WTC11 (cell line): ENCODE measurements at regions of chr7 and their contacts with region 1.

Region 1: DNA sequence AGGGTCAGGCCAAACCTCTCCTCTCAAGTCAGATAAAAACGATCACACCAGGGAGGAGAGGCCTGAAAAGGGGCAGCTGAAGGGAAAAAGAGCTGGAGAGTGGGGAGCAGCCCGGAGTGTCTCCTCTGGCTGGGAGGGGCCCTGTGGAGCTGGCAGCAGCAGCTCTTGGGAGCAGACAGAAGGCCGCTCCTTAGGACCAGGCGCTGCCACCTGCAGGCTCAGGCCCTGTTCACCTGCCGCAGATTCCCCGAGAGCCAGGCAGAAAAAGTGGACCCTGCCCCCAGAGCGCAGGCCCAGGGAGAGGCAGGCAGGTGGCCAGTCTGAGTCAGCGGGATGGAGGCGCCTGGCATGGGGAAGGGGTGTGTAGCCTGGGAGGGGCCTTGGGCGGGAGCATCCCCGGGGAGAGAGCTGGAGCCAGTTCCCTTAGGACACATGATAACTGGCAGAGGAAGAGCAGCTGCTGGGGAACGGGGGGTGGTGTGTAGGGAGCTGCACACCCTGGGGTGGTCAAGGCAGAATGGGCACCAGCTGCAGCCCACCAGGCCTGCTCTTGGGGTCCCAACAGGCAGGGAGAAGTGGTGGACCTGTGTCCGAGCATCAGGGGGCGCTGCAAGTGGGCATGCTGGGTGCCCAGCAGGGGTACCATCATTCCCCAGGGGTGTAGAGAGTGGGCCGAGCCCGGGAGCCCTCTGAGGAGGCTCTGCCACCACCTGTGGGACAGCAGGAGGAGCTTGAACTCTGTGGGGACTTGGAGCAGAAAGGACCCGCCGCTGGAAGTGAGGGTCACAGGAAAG is 177.2 kb upstream of the RHEB start:
- DNase-seq: peak; percentile 52
- ATAC-seq: peak; percentile 76
- H3K4me3 Mint-ChIP-seq: no peak overlapping the region
- H3K27ac Mint-ChIP-seq: no peak overlapping the region
- H3K4me1 Mint-ChIP-seq: peaks cover 28% of the 10 kb centered on the region
- H3K27me3 Mint-ChIP-seq: no peaks in the 10 kb centered on the region
- CTCF ChIP-seq: no peak

Region 2: DNA sequence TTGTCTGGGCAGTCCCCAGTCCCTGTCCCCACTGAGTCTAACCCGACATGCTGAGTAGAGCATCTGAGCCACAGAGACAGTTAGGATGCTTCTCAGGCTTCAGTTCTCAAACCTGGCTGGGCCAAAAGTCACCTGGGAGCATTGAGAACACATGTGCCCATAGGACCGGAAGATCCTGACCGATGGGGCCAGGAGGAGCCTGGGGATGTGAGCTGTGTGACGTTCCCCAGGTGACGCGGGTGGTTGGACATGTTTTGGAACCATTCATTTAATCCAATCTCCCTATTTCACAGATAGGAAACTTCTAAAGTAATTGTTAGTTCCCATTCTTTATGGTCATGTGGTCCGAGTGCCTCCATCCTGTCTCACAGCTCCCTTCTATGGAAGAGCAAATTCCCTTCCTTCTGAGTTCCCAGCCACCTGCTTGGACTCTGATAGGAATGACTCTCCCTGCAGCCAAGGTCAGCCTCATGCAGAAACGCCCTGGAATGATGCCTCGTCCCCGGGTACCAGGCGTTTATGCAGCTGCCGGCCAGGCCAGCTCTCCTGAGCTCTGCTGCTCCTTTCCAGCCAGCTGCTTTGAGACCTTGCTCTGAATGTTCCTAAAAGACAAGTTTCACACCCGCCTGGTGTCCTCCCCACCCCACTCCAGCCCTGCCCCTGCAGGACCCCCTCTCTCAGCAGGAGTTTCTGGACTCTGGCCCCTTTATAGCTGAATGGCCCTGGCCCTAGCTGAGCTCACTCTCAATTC is 10.7 kb before region 1 on chr7:
- CTCF ChIA-PET with region 1: interaction called, 13 read pairs
- POLR2A ChIA-PET with region 1: no interaction called
- DNase-seq: no peak
- ATAC-seq: no peak
- H3K4me3 Mint-ChIP-seq: no peak overlapping the region
- H3K27ac Mint-ChIP-seq: no peak overlapping the region
- H3K4me1 Mint-ChIP-seq: peaks cover 32% of the 10 kb centered on the region
- H3K27me3 Mint-ChIP-seq: peaks cover 4% of the 10 kb centered on the region
- CTCF ChIP-seq: no peak

Region 3: GRCh38 chr7:151715666-151716315 is 18.9 kb after region 1 on chr7:
- CTCF ChIA-PET with region 1: no interaction called
- POLR2A ChIA-PET with region 1: no interaction called
- DNase-seq: no peak
- ATAC-seq: no peak
- H3K4me3 Mint-ChIP-seq: no peak overlapping the region
- H3K27ac Mint-ChIP-seq: no peak overlapping the region
- H3K4me1 Mint-ChIP-seq: peaks cover 4% of the 10 kb centered on the region
- H3K27me3 Mint-ChIP-seq: no peaks in the 10 kb centered on the region; the same call in 1 of the 2 replicates
- CTCF ChIP-seq: no peak

Region 4: GRCh38 chr7:151736403-151736909 is 39.5 kb after region 1 on chr7:
- CTCF ChIA-PET with region 1: interaction called, 13 read pairs
- POLR2A ChIA-PET with region 1: no interaction called
- DNase-seq: no peak
- ATAC-seq: peak; percentile 74
- H3K4me3 Mint-ChIP-seq: peak overlapping the region; percentile 25
- H3K27ac Mint-ChIP-seq: no peak overlapping the region
- H3K4me1 Mint-ChIP-seq: peaks cover 24% of the 10 kb centered on the region
- H3K27me3 Mint-ChIP-seq: no peaks in the 10 kb centered on the region; the same call in 1 of the 2 replicates
- CTCF ChIP-seq: no peak